GM18951 (cell line): ENCODE measurements at regions of chr5 and their contacts with region 1.

Region 1: GRCh38 chr5:141691867-141692532 is 10.0 kb upstream of the ARAP3 start:
- POLR2A ChIP-seq: no peak

Region 2: DNA sequence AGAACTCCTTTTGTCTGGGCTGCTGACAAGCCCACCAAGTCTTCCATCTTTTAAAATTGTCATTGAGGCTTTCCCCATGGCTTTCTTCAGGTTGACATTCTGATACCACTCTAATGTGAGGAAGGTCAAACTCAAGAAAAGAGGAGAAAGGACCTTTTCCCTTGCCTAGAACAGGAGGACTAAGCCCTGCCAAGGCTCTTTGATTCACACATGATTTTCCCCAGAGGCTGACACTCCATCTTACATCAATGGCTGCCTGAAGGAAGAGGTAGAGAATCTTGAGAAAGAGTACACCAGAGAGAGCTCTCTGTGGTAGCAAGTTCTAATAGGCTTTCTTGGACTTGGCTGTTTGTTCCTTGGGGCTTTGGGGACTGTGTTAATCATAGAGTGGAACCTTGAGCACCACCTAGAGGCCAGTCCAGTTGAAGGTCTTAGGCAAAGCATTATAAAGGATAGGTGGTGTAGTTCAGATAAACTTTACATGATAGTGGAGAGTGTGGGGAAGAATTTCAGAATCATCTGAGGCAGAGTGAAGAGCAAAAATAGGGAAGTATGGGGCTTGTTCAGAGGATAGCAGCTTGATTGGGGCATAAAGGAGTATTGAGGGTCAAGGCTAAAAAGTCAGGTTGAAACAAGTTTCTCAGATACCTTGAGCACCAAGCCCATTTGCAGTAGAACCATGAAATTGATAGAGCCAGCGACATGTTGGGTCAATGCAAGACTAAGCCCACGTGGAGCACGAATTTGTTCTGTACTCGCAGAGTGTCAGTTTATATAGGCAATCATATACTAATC is 453.3 kb after region 1 on chr5:
- in situ Hi-C with region 1: loop called (anchors 25 kb)
- POLR2A ChIP-seq: no peak